ENCODE measurements at regions of chr22 and their contacts with region 1.

Region 1: GRCh38 chr22:28772633-28773460 is at the start of gene CCDC117:
- DNase-seq: peak; percentile 87
- ATAC-seq: peak; percentile 91
- H3K4me3 Mint-ChIP-seq: peak within 1 kb of the TSS; percentile 91
- H3K27ac Mint-ChIP-seq: peak within 1 kb of the TSS; percentile 91
- H3K4me1 Mint-ChIP-seq: peaks cover 28% of the 10 kb centered on the region
- H3K27me3 Mint-ChIP-seq: no peaks in the 10 kb centered on the region
- CTCF ChIP-seq: no peak
- total RNA-seq, gene CCDC117: 16.3 and 21.9 TPM in 2 replicates

Region 2: GRCh38 chr22:28674121-28674563 is 98.7 kb before region 1 on chr22:
- CTCF ChIA-PET with region 1: no interaction called
- POLR2A ChIA-PET with region 1: interaction called, 4 read pairs
- intact Hi-C with region 1: loop called (anchors 2 kb)
- DNase-seq: no peak
- ATAC-seq: peak; percentile 71
- H3K4me3 Mint-ChIP-seq: peak overlapping the region; percentile 68
- H3K27ac Mint-ChIP-seq: peak overlapping the region; percentile 91
- H3K4me1 Mint-ChIP-seq: peaks cover 30% of the 10 kb centered on the region
- H3K27me3 Mint-ChIP-seq: peaks cover 28% of the 10 kb centered on the region
- CTCF ChIP-seq: no peak

Region 3: DNA sequence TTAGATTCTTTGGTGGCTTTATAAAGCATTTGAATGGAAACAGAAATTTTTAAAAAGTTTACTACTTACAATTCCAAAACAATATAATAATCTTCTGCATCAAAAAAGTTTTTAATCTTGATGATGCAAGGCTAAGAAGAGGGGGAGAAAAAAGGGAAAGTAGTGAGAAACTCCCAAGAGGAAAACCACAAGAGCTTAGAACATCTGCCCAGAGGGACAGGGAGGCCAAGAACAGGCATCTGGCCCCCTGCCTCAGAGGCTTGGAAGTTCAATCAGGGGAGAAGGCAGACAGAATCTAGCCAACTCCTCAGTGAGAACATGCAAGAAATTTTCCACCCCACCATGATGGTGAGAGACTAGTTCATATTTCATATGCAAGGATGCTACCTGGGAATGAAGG is 69.4 kb before region 1 on chr22:
- CTCF ChIA-PET with region 1: no interaction called
- POLR2A ChIA-PET with region 1: no interaction called
- intact Hi-C with region 1: loop called (anchors 2 kb)
- DNase-seq: no peak
- ATAC-seq: no peak
- H3K4me3 Mint-ChIP-seq: no peak overlapping the region
- H3K27ac Mint-ChIP-seq: peak overlapping the region; percentile 53
- H3K4me1 Mint-ChIP-seq: peaks cover 41% of the 10 kb centered on the region
- H3K27me3 Mint-ChIP-seq: no peaks in the 10 kb centered on the region
- CTCF ChIP-seq: no peak

Region 4: GRCh38 chr22:28714043-28714442 is 58.8 kb before region 1 on chr22:
- CTCF ChIA-PET with region 1: no interaction called
- POLR2A ChIA-PET with region 1: no interaction called
- intact Hi-C with region 1: no loop called
- DNase-seq: no peak
- ATAC-seq: no peak
- H3K4me3 Mint-ChIP-seq: no peak overlapping the region
- H3K27ac Mint-ChIP-seq: no peak overlapping the region
- H3K4me1 Mint-ChIP-seq: peaks cover under 1% of the 10 kb centered on the region
- H3K27me3 Mint-ChIP-seq: no peaks in the 10 kb centered on the region
- CTCF ChIP-seq: no peak

Region 5: DNA sequence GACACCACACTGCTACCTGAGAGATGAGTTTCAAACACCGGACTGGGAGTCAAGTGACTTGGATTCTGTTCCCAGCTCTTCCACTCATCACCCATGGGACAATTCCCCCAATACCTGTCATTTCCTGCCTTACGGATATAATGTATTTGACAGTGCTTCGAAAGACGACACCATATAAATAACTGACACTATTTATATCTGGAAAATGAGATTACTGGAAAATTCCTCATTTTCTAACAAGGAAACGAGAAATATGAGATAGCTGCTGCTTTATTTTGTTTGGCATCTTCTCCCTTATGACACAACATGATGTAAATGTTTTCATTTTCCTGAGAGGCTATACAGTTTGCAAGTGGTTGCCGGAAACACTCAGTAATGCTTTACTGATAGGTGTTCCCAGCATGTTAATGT is 22.4 kb before region 1 on chr22:
- CTCF ChIA-PET with region 1: no interaction called
- POLR2A ChIA-PET with region 1: interaction called, 14 read pairs
- intact Hi-C with region 1: no loop called
- DNase-seq: no peak
- ATAC-seq: no peak
- H3K4me3 Mint-ChIP-seq: no peak overlapping the region
- H3K27ac Mint-ChIP-seq: no peak overlapping the region
- H3K4me1 Mint-ChIP-seq: peaks cover 9% of the 10 kb centered on the region
- H3K27me3 Mint-ChIP-seq: no peaks in the 10 kb centered on the region
- CTCF ChIP-seq: no peak

Region 6: DNA sequence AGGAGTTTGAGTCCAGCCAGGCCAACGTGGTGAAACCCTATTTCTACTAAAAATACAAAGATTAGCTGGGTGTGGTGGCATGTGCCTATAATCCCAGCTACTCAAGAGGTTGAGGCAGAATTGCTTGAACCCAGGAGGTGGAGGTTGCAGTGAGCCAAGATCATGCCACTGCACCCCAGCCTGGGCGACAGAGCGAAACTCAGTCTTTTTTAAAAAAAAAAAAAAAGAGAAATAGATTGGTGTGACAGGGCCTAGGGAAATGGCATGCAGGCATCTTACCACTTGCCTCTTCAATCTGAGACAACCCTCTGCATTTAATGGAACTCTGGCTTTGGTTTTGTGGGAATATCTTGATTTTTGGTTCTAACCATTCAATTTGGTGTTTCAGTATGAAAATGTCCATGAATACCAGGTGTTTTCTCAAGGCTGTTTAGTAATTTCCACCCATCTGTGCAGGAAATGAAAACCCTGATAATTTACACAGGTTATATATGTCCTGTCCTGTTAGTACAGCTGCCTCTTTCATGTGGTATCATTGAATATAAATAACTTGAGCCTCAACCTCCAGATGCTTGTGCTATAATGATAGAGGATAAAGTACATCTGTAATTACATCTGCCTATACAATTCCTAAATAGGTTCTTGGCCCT is 19.1 kb after region 1 on chr22:
- CTCF ChIA-PET with region 1: no interaction called
- POLR2A ChIA-PET with region 1: interaction called, 10 read pairs
- intact Hi-C with region 1: loop called (anchors 2 kb)
- DNase-seq: no peak
- ATAC-seq: peak; percentile 66
- H3K4me3 Mint-ChIP-seq: no peak overlapping the region
- H3K27ac Mint-ChIP-seq: peak overlapping the region; percentile 69
- H3K4me1 Mint-ChIP-seq: peaks cover 54% of the 10 kb centered on the region
- H3K27me3 Mint-ChIP-seq: no peaks in the 10 kb centered on the region
- CTCF ChIP-seq: no peak